K562 (cell line): ENCODE measurements at regions of chr11 and their contacts with region 1.

Region 1: DNA sequence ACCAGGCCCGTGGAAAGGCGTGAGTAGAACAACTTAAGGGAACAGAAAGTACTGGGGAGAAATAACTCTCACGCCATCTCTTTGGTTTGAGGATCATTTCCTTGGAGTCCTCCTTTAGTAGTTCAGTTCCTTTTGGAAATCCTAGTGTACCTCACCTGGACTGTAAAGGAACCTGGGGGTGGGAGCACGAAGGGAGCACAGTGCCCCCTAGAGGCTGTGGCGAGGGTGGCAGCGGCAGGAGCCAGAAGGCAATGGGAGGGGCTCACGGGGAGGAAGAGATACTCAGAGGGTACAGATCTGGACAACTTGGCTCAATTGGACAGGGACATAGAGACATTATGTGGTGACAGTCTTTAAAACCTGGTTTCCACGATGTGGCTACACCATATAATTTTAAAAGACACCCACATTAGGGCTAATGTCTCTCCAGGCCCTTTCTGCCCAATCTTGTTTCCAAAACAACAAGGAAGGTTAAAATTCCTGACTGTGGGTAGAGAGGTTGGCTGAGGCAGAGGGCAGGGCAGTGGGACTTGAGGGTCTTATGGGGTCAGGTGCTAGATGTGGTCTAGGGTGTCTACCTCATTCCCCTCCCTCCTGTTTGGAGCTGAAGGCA is 87.0 kb downstream of the CSNK2A3 start:
- DNase-seq: peak; percentile 64 to 90 (median 84)
- ATAC-seq: peak; percentile 98
- H3K4me3 ChIP-seq: no peak overlapping the region
- H3K27ac ChIP-seq: no peak overlapping the region
- H3K4me1 ChIP-seq: no peaks in the 10 kb centered on the region
- H3K27me3 ChIP-seq: no peaks in the 10 kb centered on the region
- CTCF ChIP-seq: peak; percentile 76 to 96 (median 81)
- EP300 ChIP-seq: no peak
- POLR2A ChIP-seq: no peak
- RAD21 ChIP-seq: peak; percentile 38 to 70

Region 2: GRCh38 chr11:11028017-11028692 is 237.9 kb before region 1 on chr11:
- CTCF ChIA-PET with region 1: interaction called, 6 read pairs
- POLR2A ChIA-PET with region 1: no interaction called
- in situ Hi-C with region 1: no loop called
- intact Hi-C with region 1: loop called (anchors 2 kb)
- DNase-seq: peak; percentile 54 to 65 (median 62)
- ATAC-seq: peak; percentile 95
- H3K4me3 ChIP-seq: no peak overlapping the region
- H3K27ac ChIP-seq: no peak overlapping the region
- H3K4me1 ChIP-seq: no peaks in the 10 kb centered on the region
- H3K27me3 ChIP-seq: peaks cover 2 to 4% of the 10 kb centered on the region in 2 experiments; a peak in 3 of 5 replicates
- CTCF ChIP-seq: peak; percentile 75 to 85 (median 84)
- EP300 ChIP-seq: no peak
- POLR2A ChIP-seq: no peak
- RAD21 ChIP-seq: peak; percentile 60 to 80

Region 3: DNA sequence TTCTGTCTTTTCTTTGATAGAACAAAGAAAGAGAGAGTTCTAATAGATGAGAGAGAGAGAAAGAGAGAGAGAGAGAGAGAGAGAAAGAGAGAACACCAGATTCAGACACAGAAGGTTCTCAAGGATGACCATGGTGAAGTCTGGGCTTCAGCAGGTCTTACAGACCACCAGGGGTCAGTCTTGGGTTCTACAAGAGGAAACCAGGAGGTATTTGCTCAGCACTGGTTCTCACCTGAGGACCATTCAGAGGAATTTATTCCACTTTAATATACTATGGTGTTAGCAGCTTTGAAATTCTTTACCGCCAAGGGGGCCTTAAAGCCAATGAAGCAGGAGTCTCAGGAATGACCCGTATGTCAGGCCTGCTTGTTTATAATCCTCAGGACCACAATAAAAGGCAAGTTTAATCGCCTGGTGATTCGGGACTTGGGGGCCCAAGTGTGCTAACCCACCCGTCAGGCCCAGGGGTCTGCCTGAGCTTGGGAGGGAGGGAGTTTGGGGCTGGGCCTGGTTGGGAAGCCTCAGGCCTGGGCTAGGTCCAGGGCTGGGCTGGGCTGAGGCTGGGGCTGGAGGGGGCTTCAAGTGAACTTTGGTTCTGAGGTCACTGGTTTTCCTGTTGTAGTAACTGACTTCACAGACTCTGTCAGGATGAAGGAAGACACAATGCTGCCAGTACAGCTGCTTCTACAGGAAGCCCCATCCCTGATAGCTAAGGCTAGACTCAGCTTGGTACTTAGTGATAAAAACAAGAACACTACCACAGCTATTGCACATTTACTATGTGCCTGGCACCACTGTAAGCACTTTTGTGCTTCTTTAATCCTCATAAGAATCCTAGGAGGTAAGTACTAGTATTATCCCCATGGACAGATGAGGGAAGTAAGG is 229.0 kb before region 1 on chr11:
- CTCF ChIA-PET with region 1: interaction called, 4 read pairs
- POLR2A ChIA-PET with region 1: no interaction called
- in situ Hi-C with region 1: no loop called
- intact Hi-C with region 1: loop called (anchors 1 kb)
- DNase-seq: peak; percentile 38 to 69 (median 41)
- ATAC-seq: peak; percentile 92
- H3K4me3 ChIP-seq: no peak overlapping the region
- H3K27ac ChIP-seq: no peak overlapping the region
- H3K4me1 ChIP-seq: no peaks in the 10 kb centered on the region
- H3K27me3 ChIP-seq: peaks cover 3 to 30% of the 10 kb centered on the region in 2 experiments; a peak in 4 of 5 replicates
- CTCF ChIP-seq: peak; percentile 65 to 77 (median 72)
- EP300 ChIP-seq: no peak
- POLR2A ChIP-seq: no peak
- RAD21 ChIP-seq: peak; percentile 46 to 80; a peak in 3 of 4 replicates

Region 4: DNA sequence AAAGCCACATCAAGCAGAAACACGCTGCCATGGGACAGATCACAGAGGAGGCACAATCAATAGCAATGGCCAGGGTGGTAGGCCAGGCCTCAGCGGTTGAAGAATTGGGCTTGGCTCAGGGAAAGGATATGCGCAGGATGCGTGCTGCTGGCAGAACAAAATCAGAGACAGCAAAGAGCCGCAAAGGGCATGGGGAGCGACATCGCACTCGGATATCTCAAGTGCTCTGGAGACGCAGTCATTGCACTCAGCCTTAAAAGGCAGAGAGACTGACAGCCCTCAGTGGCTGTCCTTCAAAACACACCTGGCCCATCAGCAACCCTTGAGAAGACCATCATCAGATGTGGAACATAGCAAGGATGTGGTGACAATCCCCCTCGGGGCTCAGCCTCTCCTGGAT is 36.5 kb after region 1 on chr11:
- CTCF ChIA-PET with region 1: no interaction called
- POLR2A ChIA-PET with region 1: no interaction called
- in situ Hi-C with region 1: no loop called
- intact Hi-C with region 1: no loop called
- DNase-seq: no peak
- ATAC-seq: no peak
- H3K4me3 ChIP-seq: no peak overlapping the region
- H3K27ac ChIP-seq: no peak overlapping the region
- H3K4me1 ChIP-seq: no peaks in the 10 kb centered on the region
- H3K27me3 ChIP-seq: peaks cover 0 to 18% of the 10 kb centered on the region in 2 experiments; a peak in 2 of 5 replicates
- CTCF ChIP-seq: no peak
- EP300 ChIP-seq: no peak
- POLR2A ChIP-seq: no peak
- RAD21 ChIP-seq: no peak